Activated naive CD4-positive, alpha-beta T cell treated with anti-CD3 and anti-CD28 coated beads for 36 hours (primary cell): ENCODE measurements at regions of chr3 and their contacts with region 1.

Region 1: GRCh38 chr3:141311496-141312353 is 56.6 kb upstream of the ZBTB38 start:
- DNase-seq: peak; percentile 100
- H3K4me3 Mint-ChIP-seq: peak overlapping the region; percentile 100
- H3K27ac Mint-ChIP-seq: peak overlapping the region; percentile 98
- H3K4me1 Mint-ChIP-seq: peaks cover 46% of the 10 kb centered on the region
- H3K27me3 Mint-ChIP-seq: no peaks in the 10 kb centered on the region

Region 2: DNA sequence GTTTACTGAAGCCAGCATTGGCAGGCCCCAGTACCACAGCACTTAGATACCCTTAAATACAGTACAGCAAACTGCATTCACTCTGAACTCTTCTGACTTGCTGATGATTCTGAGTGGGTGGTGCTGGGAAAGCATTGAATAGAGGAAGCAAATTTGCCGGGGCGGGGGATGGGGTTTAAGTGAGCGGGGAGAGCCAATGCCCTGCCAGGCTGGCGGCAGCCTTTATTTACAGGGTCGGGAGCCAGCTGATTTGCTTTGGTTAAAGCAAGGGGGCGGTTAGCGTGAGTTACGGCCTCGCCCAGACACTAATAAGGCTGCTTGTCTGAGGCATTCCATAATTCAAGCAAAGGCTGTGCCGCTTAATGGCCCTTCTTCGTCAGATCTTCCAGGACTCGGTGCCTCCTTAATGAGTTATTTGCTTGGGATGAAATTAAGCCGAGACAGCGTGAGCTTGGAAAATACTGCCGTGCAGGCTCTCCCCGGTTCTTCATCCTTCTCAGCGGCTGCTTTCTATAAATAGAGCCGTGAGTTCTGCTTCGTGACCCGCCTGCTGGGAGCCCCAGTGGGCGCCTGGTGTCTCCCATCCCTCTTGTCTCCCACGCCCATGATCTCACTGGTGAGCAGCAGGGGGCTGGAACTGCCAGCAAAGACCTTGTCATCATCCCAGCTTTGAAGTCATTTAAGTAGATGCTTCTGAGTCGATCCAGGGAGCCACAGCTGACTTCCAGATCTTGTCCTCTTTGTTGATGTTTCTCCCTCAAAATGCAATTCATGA is 234.7 kb before region 1 on chr3:
- CTCF ChIA-PET with region 1: no interaction called
- intact Hi-C with region 1: no loop called
- DNase-seq: peak; percentile 62
- H3K4me3 Mint-ChIP-seq: peak overlapping the region; percentile 48
- H3K27ac Mint-ChIP-seq: no peak overlapping the region
- H3K4me1 Mint-ChIP-seq: peaks cover 16% of the 10 kb centered on the region
- H3K27me3 Mint-ChIP-seq: no peaks in the 10 kb centered on the region

Region 3: DNA sequence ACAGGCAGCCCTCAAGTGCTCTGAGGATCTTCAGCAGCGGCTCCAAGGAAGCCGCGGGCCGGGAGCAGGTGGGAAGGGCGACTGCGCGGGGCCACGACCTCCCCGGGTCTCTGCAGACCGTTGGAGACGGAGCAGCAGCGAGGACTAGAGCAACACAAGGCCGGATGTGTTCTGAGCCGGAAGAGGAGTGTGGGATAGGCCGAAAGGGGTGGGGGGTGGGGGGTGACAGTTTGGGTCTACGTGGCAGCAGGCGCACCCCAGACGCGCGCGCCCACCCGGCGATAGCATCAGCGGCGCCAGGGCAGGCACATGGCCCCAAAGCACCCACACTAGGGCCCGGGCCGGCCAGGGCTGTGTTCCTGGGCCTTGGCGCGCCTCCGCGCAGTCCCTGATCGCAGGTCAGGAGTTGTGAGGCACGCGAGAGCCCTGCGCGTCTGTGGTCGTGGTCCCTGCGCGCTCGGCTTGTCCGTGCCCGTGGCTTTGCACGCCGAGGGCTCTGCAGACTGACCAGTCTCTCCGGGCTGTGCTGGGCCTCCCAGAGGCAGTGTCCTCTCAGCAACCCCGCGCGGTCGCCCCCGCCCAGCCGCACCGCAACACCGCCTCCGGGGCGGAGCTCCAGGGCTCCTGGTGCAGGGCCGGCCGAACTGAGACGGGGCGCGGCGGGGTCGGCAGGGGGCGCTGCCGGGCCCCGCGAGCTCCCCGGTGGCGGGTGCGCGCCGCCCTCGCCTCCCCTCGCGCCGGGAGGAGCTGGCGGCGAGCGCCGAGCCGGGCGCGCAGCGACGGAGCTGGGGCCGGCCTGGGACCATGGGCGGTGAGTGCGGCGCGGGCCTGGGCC is 80.4 kb before region 1 on chr3 and contains the start of gene PXYLP1:
- CTCF ChIA-PET with region 1: interaction called, 19 read pairs
- intact Hi-C with region 1: loop called (anchors 1 kb)
- DNase-seq: peak; percentile 92
- H3K4me3 Mint-ChIP-seq: peak within 1 kb of the TSS; percentile 97
- H3K27ac Mint-ChIP-seq: peak within 1 kb of the TSS; percentile 95
- H3K4me1 Mint-ChIP-seq: peaks cover 34% of the 10 kb centered on the region
- H3K27me3 Mint-ChIP-seq: no peaks in the 10 kb centered on the region
- total RNA-seq, gene PXYLP1: 8.4 to 9.7 TPM

Region 4: GRCh38 chr3:141370065-141370533 is 58.4 kb after region 1 on chr3:
- CTCF ChIA-PET with region 1: interaction called, 7 read pairs
- intact Hi-C with region 1: loop called (anchors 1 kb)
- DNase-seq: peak; percentile 70
- H3K4me3 Mint-ChIP-seq: no peak overlapping the region
- H3K27ac Mint-ChIP-seq: no peak overlapping the region
- H3K4me1 Mint-ChIP-seq: peaks cover 21% of the 10 kb centered on the region
- H3K27me3 Mint-ChIP-seq: no peaks in the 10 kb centered on the region

Region 5: GRCh38 chr3:141452036-141452435 is 140.3 kb after region 1 on chr3:
- CTCF ChIA-PET with region 1: interaction called, 415 read pairs
- intact Hi-C with region 1: loop called (anchors 1 kb)
- DNase-seq: peak; percentile 75
- H3K4me3 Mint-ChIP-seq: no peak overlapping the region
- H3K27ac Mint-ChIP-seq: no peak overlapping the region
- H3K4me1 Mint-ChIP-seq: peaks cover 20% of the 10 kb centered on the region
- H3K27me3 Mint-ChIP-seq: no peaks in the 10 kb centered on the region

Region 6: DNA sequence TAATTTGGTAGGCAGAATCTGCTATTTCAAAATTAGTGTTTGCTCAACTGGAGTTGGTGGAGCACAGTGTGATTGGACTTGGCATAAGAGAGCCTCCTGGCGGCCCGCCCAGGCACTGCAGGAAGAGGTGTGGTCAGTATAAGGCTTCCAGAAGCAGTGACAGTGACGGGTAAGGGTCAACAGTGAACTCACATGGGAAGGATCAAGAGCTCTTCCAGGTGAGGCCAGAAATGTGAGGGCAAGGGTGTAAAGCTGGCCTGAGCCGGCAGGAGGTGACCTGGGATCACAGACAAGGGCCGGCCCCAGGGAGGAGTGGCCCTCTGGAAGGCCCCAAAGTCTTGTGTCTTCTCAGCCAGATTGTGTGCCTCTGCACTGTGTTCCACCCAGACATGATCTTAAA is 333.2 kb after region 1 on chr3:
- CTCF ChIA-PET with region 1: interaction called, 4 read pairs
- intact Hi-C with region 1: loop called (anchors 5 kb)
- DNase-seq: peak; percentile 86
- H3K4me3 Mint-ChIP-seq: no peak overlapping the region
- H3K27ac Mint-ChIP-seq: no peak overlapping the region
- H3K4me1 Mint-ChIP-seq: peaks cover 3% of the 10 kb centered on the region
- H3K27me3 Mint-ChIP-seq: no peaks in the 10 kb centered on the region